Transverse colon (tissue), 4 donors: ENCODE measurements at regions of chr14 and their contacts with region 1.

Region 1: DNA sequence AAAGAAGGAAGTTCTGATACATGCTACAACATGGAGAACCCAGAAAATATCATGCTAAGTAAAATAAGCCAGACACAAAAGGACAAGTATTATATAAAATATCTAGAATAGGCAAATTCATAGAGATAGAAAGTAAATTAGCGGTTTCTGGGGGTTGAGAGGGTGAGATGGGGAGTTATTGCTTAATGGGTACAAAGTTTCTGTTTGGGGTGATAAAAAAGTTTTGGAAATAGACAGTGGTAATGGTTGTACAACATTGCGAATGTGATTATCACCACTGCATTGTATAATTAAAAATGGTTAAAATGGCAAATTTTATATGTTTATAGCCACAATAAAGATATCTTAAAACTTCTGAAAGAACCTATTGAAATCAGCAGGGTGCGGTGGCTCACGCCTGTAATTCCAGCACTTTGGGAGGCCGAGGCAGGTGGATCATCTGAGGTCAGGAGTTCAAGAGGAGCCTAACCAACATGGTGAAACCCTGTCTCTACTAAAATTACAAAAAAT is 15.0 kb downstream of the ZBTB25 start:
- DNase-seq: peak; percentile 41
- H3K4me3 ChIP-seq: no peak overlapping the region
- H3K27ac ChIP-seq: no peak overlapping the region
- H3K4me1 ChIP-seq: peaks cover 0 to 8% (median 0%) of the 10 kb centered on the region in 4 donors
- H3K27me3 ChIP-seq: no peaks in the 10 kb centered on the region
- CTCF ChIP-seq: no peak
- EP300 ChIP-seq: no peak
- POLR2A ChIP-seq: no peak

Region 2: GRCh38 chr14:64338616-64339316 is 149.9 kb before region 1 on chr14:
- in situ Hi-C with region 1: loop called in 1 of 4 experiments (anchors 25 kb)
- intact Hi-C with region 1: loop called (anchors 10 kb)
- DNase-seq: peak; percentile 96
- H3K4me3 ChIP-seq: peak overlapping the region; percentile 55 to 80 (median 71)
- H3K27ac ChIP-seq: peak overlapping the region; percentile 86 to 95 (median 90)
- H3K4me1 ChIP-seq: peaks cover 0 to 12% (median 5%) of the 10 kb centered on the region in 4 donors
- H3K27me3 ChIP-seq: no peaks in the 10 kb centered on the region
- CTCF ChIP-seq: no peak
- EP300 ChIP-seq: no peak
- POLR2A ChIP-seq: peak; percentile 72

Region 3: GRCh38 chr14:64421166-64421565 is 67.5 kb before region 1 on chr14:
- in situ Hi-C with region 1: loop called in 1 of 4 experiments (anchors 10 kb)
- intact Hi-C with region 1: no loop called
- DNase-seq: no peak
- H3K4me3 ChIP-seq: no peak overlapping the region
- H3K27ac ChIP-seq: no peak overlapping the region
- H3K4me1 ChIP-seq: no peaks in the 10 kb centered on the region
- H3K27me3 ChIP-seq: no peaks in the 10 kb centered on the region
- CTCF ChIP-seq: no peak
- EP300 ChIP-seq: no peak
- POLR2A ChIP-seq: no peak